ENCODE measurements at regions of chr15 and their contacts with region 1.

Region 1: GRCh38 chr15:59779110-59779509 is 90.0 kb upstream of the BNIP2 start:
- DNase-seq: no peak
- ATAC-seq: no peak
- H3K4me3 ChIP-seq: no peak overlapping the region
- H3K27ac ChIP-seq: no peak overlapping the region
- H3K4me1 ChIP-seq: no peaks in the 10 kb centered on the region
- H3K27me3 ChIP-seq: 0 out of 2 replicates have a peak, but pooled peaks cover 2% of the 10 kb centered on the region
- CTCF ChIP-seq: no peak

Region 2: DNA sequence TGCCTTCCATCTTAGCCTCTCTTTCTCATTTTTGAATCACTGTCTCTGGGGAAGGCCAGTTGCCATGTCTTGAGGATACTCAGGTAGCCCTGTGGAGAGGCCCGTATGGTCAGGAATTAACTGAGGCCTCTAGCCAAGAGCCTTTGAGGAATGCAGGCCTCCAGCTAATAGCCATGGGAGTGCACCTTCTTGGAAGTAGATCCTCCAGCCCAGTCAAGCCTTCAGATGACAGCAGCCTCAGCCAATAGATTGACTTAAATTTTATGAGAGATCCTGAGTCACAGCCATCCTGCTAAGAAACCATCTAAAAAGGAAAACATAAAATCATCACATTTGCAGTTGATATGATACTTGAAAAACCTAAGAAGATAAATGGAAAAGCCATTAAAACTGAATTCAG is 22.5 kb after region 1 on chr15:
- CTCF ChIA-PET with region 1: no interaction called
- POLR2A ChIA-PET with region 1: no interaction called
- in situ Hi-C with region 1: no loop called
- intact Hi-C with region 1: no loop called
- DNase-seq: no peak
- ATAC-seq: no peak
- H3K4me3 ChIP-seq: no peak overlapping the region
- H3K27ac ChIP-seq: no peak overlapping the region
- H3K4me1 ChIP-seq: no peaks in the 10 kb centered on the region
- H3K27me3 ChIP-seq: no peaks in the 10 kb centered on the region; the same call in 1 of the 2 replicates
- CTCF ChIP-seq: no peak

Region 3: GRCh38 chr15:59838900-59839299 is 59.8 kb after region 1 on chr15:
- CTCF ChIA-PET with region 1: no interaction called
- POLR2A ChIA-PET with region 1: no interaction called
- in situ Hi-C with region 1: no loop called
- intact Hi-C with region 1: loop called (anchors 10 kb)
- DNase-seq: no peak
- ATAC-seq: no peak
- H3K4me3 ChIP-seq: no peak overlapping the region
- H3K27ac ChIP-seq: no peak overlapping the region
- H3K4me1 ChIP-seq: no peaks in the 10 kb centered on the region
- H3K27me3 ChIP-seq: 0 out of 2 replicates have a peak, but pooled peaks cover 2% of the 10 kb centered on the region
- CTCF ChIP-seq: no peak

Measured in Panc1 (cell line).